ENCODE measurements at regions of chr11 and their contacts with region 1.

Region 1: GRCh38 chr11:67071420-67072284 is 15.0 kb downstream of the RHOD start:
- DNase-seq: peak; percentile 87
- H3K4me3 Mint-ChIP-seq: peak overlapping the region; percentile 3
- H3K27ac Mint-ChIP-seq: no peak overlapping the region
- H3K4me1 Mint-ChIP-seq: peaks cover 4% of the 10 kb centered on the region
- H3K27me3 Mint-ChIP-seq: peaks cover 3% of the 10 kb centered on the region

Region 2: GRCh38 chr11:66694732-66695207 is 376.9 kb before region 1 on chr11:
- CTCF ChIA-PET with region 1: no interaction called
- POLR2A ChIA-PET with region 1: no interaction called
- intact Hi-C with region 1: loop called (anchors 2 kb)
- DNase-seq: peak; percentile 91
- H3K4me3 Mint-ChIP-seq: no peak overlapping the region
- H3K27ac Mint-ChIP-seq: no peak overlapping the region
- H3K4me1 Mint-ChIP-seq: no peaks in the 10 kb centered on the region
- H3K27me3 Mint-ChIP-seq: no peaks in the 10 kb centered on the region

Region 3: DNA sequence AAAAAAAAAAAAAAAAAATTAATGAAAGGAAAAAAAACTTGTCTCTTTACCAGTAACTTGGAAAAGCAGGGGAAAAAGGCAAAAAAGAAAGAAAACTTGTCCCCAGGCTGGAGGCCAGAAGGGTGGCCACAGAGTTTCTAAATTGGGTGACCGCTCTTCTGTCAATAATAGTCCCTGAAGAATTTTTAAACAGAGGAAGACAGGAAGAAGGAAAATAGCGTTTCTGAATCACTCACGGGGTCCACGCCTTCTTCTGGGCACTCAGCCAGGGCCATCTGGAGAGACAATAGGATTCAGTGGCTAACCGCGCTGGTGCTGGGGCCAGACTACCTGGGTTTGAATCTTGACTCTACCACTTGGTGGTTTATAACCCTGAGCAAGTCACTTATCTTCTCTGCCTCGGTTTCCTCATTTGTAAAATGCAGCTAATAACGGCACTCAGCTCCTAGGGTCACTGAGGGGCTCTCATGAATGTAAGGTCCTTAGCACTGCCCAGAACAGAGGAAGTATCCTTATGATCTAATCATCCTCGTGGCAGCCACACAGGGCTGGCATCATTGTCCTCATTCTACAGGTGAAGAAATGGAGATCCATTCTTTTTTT is 89.6 kb before region 1 on chr11:
- CTCF ChIA-PET with region 1: no interaction called
- POLR2A ChIA-PET with region 1: no interaction called
- intact Hi-C with region 1: no loop called
- DNase-seq: peak; percentile 48
- H3K4me3 Mint-ChIP-seq: no peak overlapping the region
- H3K27ac Mint-ChIP-seq: no peak overlapping the region
- H3K4me1 Mint-ChIP-seq: peaks cover 4% of the 10 kb centered on the region
- H3K27me3 Mint-ChIP-seq: peaks cover 4% of the 10 kb centered on the region

Region 4: GRCh38 chr11:67053896-67054842 is 17.5 kb before region 1 on chr11:
- CTCF ChIA-PET with region 1: interaction called, 81 read pairs
- POLR2A ChIA-PET with region 1: no interaction called
- intact Hi-C with region 1: loop called (anchors 1 kb)
- DNase-seq: peak; percentile 70
- H3K4me3 Mint-ChIP-seq: no peak overlapping the region
- H3K27ac Mint-ChIP-seq: no peak overlapping the region
- H3K4me1 Mint-ChIP-seq: peaks cover 21% of the 10 kb centered on the region
- H3K27me3 Mint-ChIP-seq: peaks cover 4% of the 10 kb centered on the region

Region 5: GRCh38 chr11:67082035-67082791 is 10.6 kb after region 1 on chr11:
- CTCF ChIA-PET with region 1: interaction called, 13 read pairs
- POLR2A ChIA-PET with region 1: no interaction called
- intact Hi-C with region 1: no loop called
- DNase-seq: no peak
- H3K4me3 Mint-ChIP-seq: no peak overlapping the region
- H3K27ac Mint-ChIP-seq: no peak overlapping the region
- H3K4me1 Mint-ChIP-seq: peaks cover 20% of the 10 kb centered on the region
- H3K27me3 Mint-ChIP-seq: peaks cover 6% of the 10 kb centered on the region

Region 6: GRCh38 chr11:68137822-68138221 is 1066.2 kb after region 1 on chr11:
- CTCF ChIA-PET with region 1: no interaction called
- POLR2A ChIA-PET with region 1: no interaction called
- intact Hi-C with region 1: no loop called
- DNase-seq: no peak
- H3K4me3 Mint-ChIP-seq: no peak overlapping the region
- H3K27ac Mint-ChIP-seq: no peak overlapping the region
- H3K4me1 Mint-ChIP-seq: peaks cover 12% of the 10 kb centered on the region
- H3K27me3 Mint-ChIP-seq: no peaks in the 10 kb centered on the region

Measured in activated CD4-positive, alpha-beta memory T cell treated with anti-CD3 and anti-CD28 coated beads for 36 hours (primary cell).